Dorsolateral prefrontal cortex (tissue), 120 donors: ENCODE measurements at regions of chr2 and their contacts with region 1.

Region 1: DNA sequence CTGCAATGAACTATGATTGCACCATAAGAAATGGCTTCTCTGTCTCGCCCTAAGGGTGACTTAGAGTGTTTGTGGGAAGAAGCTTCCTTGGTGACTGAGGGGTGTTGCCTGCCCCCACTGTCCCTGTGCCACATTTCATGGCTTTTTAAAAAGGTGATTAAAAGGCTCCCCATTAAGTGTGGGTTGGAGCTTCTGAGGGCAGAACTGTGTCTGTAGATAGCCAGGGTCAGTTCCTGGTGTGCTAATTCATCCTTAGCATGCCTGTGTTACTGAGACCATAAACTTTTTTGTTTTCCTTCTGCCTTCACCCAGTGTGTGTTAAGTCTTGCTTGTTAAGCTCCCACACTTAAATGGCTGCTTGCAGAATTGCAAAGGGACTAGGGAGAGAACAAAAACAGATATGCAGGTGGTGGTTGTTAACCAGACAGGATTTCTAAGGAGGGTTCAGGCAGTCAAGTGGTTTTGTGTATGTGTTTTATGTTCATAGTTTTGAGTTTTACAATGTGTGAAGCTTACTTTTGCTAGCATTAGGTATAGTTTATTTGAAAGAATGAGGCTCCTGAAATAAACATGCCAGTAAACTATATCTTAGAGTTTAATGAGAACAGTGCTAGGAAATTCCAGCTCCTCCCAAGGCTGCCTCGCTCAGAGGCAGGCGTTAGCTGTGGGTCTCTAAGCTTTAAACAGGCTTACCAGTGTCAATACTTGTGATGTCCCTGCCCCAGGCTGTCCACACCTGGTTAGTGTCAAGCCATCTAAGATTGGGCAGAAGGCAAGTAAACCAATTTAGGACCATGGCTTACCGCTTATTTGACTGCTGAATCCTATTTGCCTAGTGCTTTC is 14.5 kb downstream of the CERS6 start:
- DNase-seq: no peak
- H3K4me3 ChIP-seq: no peak overlapping the region
- H3K27ac ChIP-seq: no peak overlapping the region
- H3K27me3 ChIP-seq: no peaks in the 10 kb centered on the region
- CTCF ChIP-seq: no peak

Region 2: DNA sequence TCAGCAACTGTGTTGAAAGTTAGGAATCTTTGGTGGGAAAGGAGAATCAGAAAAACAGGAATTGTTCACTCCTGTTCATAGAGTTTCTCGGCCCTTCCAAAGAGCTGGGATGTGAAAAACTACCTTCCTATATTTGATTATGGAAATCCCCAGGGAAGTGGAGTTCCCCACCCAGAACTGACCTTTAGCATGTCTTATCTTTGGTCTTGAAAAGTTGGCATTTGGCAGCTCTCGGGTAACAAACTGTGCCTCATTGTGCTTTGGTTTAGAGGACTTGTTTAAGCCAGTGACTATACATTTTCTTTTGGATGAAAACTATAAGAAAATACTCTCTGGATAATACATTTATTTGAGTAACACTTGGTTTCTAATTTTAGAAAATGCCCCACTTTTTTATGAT is 65.8 kb before region 1 on chr2:
- intact Hi-C with region 1: loop called in 1 of 2 experiments (anchors 2 kb)
- DNase-seq: no peak
- H3K4me3 ChIP-seq: no peak overlapping the region
- H3K27ac ChIP-seq: no peak overlapping the region
- H3K27me3 ChIP-seq: no peaks in the 10 kb centered on the region
- CTCF ChIP-seq: no peak